AG04449 (cell line): ENCODE measurements at regions of chr2 and their contacts with region 1.

Region 1: GRCh38 chr2:64488050-64488974 is 34.4 kb downstream of the LGALSL start:
- DNase-seq: no peak
- H3K4me3 ChIP-seq: no peak overlapping the region
- CTCF ChIP-seq: peak; percentile 83

Region 2: DNA sequence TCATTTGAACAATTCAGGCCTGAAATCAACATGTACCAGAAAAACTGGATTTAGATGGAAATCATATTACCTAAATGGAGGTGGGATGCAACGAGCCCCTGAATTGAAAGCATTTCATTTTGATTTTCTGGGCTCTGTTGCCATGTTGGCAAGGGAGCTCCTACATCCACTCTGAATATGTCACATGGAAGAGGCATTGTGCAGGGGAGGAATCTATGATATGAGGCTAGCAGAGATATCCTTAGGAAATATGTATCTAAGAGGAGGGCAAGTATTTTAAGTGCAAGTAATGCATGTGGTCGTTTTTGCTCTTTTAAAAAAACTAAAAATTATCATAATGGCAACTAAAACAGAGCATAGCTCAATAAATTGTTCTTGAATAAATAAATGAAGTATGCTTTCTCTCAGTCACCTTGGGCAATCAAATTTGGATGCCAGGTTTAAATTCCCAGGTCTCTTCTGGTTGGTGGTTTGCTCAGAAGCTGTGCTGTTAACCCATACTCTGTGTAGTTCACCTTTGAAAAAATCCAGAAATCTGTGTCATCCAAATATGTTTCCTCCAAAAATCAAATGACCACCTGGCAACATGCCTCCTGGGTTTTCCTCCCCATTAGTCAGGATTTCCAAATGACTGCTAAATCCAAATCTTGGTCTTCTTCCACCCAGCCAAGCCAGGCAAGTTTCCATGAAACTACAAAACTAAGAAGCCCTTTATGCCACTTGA is 40.8 kb before region 1 on chr2:
- CTCF ChIA-PET with region 1: interaction called, 11 read pairs
- POLR2A ChIA-PET with region 1: no interaction called
- DNase-seq: no peak
- H3K4me3 ChIP-seq: no peak overlapping the region
- CTCF ChIP-seq: no peak

Region 3: DNA sequence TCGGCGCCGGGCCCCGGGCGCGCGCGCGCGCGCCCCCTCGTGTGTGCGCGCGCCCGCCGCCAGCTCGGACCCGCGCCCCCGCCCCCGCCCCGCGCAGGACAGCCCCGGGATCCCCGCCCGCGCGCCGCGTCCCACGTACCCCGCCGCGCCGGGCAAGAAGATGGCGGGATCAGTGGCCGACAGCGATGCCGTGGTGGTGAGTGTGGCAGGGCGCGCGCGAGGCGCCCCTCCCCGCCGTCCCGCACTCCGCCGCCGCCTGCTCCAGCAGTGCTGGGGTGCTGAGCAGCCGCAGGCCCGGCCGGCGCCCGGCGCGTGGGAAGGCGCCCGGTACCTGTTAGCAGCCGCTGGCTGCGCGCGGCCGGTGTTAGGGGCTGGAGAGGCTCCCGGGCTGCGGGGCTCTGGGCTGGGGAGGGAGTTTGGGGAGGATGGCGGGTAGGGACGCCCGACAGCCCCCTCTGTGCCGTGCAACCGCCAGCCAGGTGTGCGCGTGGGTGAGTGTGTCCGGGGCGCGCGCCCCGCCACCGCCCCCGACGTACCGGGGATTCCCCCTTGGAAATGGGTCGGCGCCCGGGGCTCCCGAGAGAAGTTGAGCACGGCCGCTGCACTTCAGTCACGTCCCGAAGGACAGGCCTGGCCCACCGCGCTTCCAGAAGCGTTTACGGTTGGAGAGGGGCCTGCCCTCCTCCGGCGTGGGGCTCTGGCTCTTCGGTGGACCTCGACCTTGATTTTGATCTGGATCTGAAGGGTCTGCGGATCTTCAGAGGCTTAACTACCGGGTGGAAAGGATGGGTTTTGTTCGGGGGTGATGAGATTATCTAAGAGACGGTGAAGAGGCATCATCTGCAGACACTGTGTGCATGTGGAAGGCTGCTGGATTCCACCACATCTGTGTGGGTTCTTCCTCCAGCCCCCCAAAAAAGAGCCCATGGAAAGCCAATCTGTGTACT is 33.7 kb before region 1 on chr2:
- CTCF ChIA-PET with region 1: interaction called, 22 read pairs
- POLR2A ChIA-PET with region 1: no interaction called
- DNase-seq: no peak
- H3K4me3 ChIP-seq: peak overlapping the region; percentile 62
- CTCF ChIP-seq: no peak

Region 4: DNA sequence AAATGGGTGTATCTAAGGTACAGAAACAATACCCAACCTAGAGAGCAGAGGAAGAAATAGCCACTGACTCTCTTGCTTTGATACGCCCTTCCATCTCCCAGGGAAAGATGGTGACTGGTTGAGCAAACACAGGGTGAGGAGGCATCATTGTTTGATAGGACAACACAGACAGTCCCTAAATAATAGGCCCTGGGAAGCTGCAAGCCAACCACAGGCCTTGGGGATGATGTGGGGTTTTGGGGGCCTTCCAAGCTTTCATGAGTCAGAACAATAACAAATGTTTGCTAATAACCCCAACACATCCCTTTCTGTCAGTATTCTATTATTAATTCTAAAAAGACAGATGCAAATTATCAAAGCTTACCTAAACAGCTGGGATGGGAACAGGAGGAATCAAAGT is 24.5 kb before region 1 on chr2:
- CTCF ChIA-PET with region 1: interaction called, 13 read pairs
- POLR2A ChIA-PET with region 1: no interaction called
- DNase-seq: no peak
- H3K4me3 ChIP-seq: no peak overlapping the region
- CTCF ChIP-seq: no peak

Region 5: GRCh38 chr2:64470766-64471295 is 17.5 kb before region 1 on chr2:
- CTCF ChIA-PET with region 1: interaction called, 51 read pairs
- POLR2A ChIA-PET with region 1: no interaction called
- DNase-seq: no peak
- H3K4me3 ChIP-seq: no peak overlapping the region
- CTCF ChIP-seq: no peak

Region 6: GRCh38 chr2:64504774-64505720 is 16.7 kb after region 1 on chr2:
- CTCF ChIA-PET with region 1: interaction called, 47 read pairs
- POLR2A ChIA-PET with region 1: no interaction called
- DNase-seq: no peak
- H3K4me3 ChIP-seq: no peak overlapping the region
- CTCF ChIP-seq: no peak

Region 7: GRCh38 chr2:64516628-64517510 is 28.6 kb after region 1 on chr2:
- CTCF ChIA-PET with region 1: interaction called, 13 read pairs
- POLR2A ChIA-PET with region 1: no interaction called
- DNase-seq: no peak
- H3K4me3 ChIP-seq: no peak overlapping the region
- CTCF ChIP-seq: no peak

Region 8: DNA sequence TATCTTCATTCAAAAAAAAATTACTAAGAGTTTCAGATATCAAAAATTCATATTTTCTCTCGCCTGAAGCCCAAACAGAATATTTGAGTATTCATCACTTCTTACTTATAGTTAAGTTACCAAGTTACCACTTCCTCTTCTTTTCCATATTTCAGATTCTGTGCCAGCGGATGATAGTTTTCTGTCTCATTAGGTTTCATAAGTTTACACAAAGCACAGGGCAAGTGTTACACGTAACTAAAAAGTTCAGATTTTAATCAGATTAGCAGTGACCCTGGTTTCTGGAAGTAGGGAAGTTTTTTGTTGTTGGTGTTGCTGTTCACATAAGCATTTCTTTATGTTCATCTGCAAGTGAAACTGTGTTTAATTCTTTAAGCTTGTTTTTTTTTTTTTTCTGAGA is 46.1 kb after region 1 on chr2:
- CTCF ChIA-PET with region 1: no interaction called
- POLR2A ChIA-PET with region 1: no interaction called
- DNase-seq: no peak
- H3K4me3 ChIP-seq: no peak overlapping the region
- CTCF ChIP-seq: no peak